Upper lobe of right lung (tissue), 1 donor: ENCODE measurements at regions of chr1 and their contacts with region 1.

Region 1: GRCh38 chr1:30801771-30802198 is 44.2 kb upstream of the LAPTM5 start:
- DNase-seq: peak; percentile 91
- ATAC-seq: peak; percentile 79
- H3K4me3 ChIP-seq: no peak overlapping the region
- H3K27ac ChIP-seq: no peak overlapping the region
- H3K4me1 ChIP-seq: peaks cover 27% of the 10 kb centered on the region
- H3K27me3 ChIP-seq: peaks cover 4% of the 10 kb centered on the region
- CTCF ChIP-seq: peak; percentile 94

Region 2: DNA sequence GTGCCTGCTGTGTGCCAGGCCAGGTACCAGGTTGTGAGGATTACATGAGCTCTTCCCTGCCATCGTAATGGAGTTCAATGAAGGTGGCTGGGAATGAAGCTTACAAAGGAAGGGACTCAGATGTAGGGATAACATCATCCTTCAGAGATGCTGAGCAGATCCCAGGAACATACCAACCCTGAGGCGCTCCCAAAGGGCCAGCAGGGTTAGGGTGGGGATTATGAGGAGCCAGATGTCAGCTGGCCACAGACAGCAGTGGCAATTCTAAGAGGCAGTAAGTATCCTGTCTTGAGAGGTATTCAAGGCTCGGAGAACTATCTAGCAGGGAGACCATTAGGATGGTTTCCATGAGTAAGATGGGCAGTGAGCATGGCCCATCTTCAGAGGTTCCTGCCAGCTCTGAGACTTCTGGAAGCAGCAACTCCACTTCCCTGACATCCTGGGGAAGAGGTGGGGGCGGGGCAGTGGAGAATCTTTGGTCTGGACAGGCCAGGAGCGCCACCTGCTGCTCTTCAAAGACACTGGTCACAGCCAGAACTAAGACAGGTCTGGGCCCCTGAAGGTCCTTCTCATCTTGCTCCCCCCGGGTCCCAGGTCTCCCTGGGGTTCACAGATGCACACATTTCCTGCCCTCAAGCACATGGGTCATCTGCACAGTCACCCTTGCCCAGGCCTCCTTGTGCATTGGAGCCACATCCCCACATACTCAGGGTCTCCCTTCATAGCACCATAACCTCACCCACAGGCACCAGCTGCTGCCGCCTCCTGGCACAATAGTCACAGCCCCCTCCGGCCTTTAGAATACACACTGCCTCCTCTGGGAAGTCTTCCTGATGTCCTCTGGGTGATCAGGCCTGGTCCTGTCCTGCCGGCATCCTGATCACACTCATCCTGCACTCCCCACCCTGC is 109.5 kb after region 1 on chr1:
- intact Hi-C with region 1: loop called (anchors 5 kb)
- DNase-seq: peak; percentile 92
- ATAC-seq: peak; percentile 81
- H3K4me3 ChIP-seq: no peak overlapping the region
- H3K27ac ChIP-seq: no peak overlapping the region
- H3K4me1 ChIP-seq: peaks cover 22% of the 10 kb centered on the region
- H3K27me3 ChIP-seq: no peaks in the 10 kb centered on the region
- CTCF ChIP-seq: peak; percentile 80